ENCODE measurements at regions of chr7 and their contacts with region 1.

Region 1: DNA sequence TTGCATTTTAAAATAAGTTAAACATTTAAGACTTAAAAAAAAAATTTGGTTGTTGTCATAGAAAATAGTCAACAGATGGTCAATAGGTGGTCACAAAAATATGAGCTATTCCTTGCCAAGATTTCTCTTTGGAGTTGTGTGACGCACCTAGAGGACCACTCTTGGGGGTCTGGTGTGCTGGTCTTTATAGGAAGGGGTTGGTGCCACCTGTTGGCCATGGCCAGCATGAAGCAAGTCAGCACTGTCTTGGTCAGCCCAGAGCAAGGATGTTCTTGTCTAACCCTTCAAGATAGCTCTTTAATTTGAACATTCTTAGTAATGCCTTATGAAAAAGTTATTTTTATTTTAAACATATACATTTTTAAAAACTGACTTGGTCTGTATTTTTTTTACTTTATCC is 267.9 kb upstream of the CNTNAP2 start:
- DNase-seq: peak; percentile 25
- ATAC-seq: peak; percentile 64; the same call in 1 of the 2 replicates
- H3K4me3 ChIP-seq: no peak overlapping the region
- H3K27ac ChIP-seq: no peak overlapping the region
- H3K4me1 ChIP-seq: no peaks in the 10 kb centered on the region
- H3K27me3 ChIP-seq: no peaks in the 10 kb centered on the region
- CTCF ChIP-seq: peak; percentile 69

Region 2: GRCh38 chr7:145036604-145037405 is 811.9 kb before region 1 on chr7:
- CTCF ChIA-PET with region 1: no interaction called
- POLR2A ChIA-PET with region 1: no interaction called
- intact Hi-C with region 1: loop called (anchors 10 kb)
- DNase-seq: peak; percentile 75
- ATAC-seq: peak; percentile 73; the same call in 1 of the 2 replicates
- H3K4me3 ChIP-seq: no peak overlapping the region
- H3K27ac ChIP-seq: no peak overlapping the region
- H3K4me1 ChIP-seq: no peaks in the 10 kb centered on the region
- H3K27me3 ChIP-seq: peaks cover 27% of the 10 kb centered on the region
- CTCF ChIP-seq: peak; percentile 92

Region 3: GRCh38 chr7:145169942-145170341 is 678.7 kb before region 1 on chr7:
- CTCF ChIA-PET with region 1: interaction called, 3 read pairs
- POLR2A ChIA-PET with region 1: no interaction called
- intact Hi-C with region 1: loop called (anchors 1 kb)
- DNase-seq: peak; percentile 46
- ATAC-seq: peak; percentile 48; the same call in 1 of the 2 replicates
- H3K4me3 ChIP-seq: no peak overlapping the region
- H3K27ac ChIP-seq: no peak overlapping the region
- H3K4me1 ChIP-seq: no peaks in the 10 kb centered on the region
- H3K27me3 ChIP-seq: peaks cover 10% of the 10 kb centered on the region
- CTCF ChIP-seq: peak; percentile 61

Region 4: GRCh38 chr7:145462463-145462862 is 386.2 kb before region 1 on chr7:
- CTCF ChIA-PET with region 1: no interaction called
- POLR2A ChIA-PET with region 1: no interaction called
- intact Hi-C with region 1: no loop called
- DNase-seq: no peak
- ATAC-seq: no peak
- H3K4me3 ChIP-seq: no peak overlapping the region
- H3K27ac ChIP-seq: no peak overlapping the region
- H3K4me1 ChIP-seq: no peaks in the 10 kb centered on the region
- H3K27me3 ChIP-seq: no peaks in the 10 kb centered on the region
- CTCF ChIP-seq: no peak

Region 5: GRCh38 chr7:145557805-145558204 is 290.9 kb before region 1 on chr7:
- CTCF ChIA-PET with region 1: no interaction called
- POLR2A ChIA-PET with region 1: no interaction called
- intact Hi-C with region 1: no loop called
- DNase-seq: no peak
- ATAC-seq: no peak
- H3K4me3 ChIP-seq: no peak overlapping the region
- H3K27ac ChIP-seq: no peak overlapping the region
- H3K4me1 ChIP-seq: no peaks in the 10 kb centered on the region
- H3K27me3 ChIP-seq: no peaks in the 10 kb centered on the region
- CTCF ChIP-seq: no peak